Vagina (tissue), 2 donors: ENCODE measurements at regions of chr6 and their contacts with region 1.

Region 1: GRCh38 chr6:30483677-30484279 is 5.5 kb upstream of the HLA-E start:
- DNase-seq: no peak
- H3K4me3 ChIP-seq: no peak overlapping the region
- H3K27ac ChIP-seq: no peak overlapping the region
- H3K4me1 ChIP-seq: peaks cover 20% of the 10 kb centered on the region
- H3K27me3 ChIP-seq: peaks cover 10% of the 10 kb centered on the region
- CTCF ChIP-seq: peak; percentile 38 to 72 (median 55)
- POLR2A ChIP-seq: no peak

Region 2: DNA sequence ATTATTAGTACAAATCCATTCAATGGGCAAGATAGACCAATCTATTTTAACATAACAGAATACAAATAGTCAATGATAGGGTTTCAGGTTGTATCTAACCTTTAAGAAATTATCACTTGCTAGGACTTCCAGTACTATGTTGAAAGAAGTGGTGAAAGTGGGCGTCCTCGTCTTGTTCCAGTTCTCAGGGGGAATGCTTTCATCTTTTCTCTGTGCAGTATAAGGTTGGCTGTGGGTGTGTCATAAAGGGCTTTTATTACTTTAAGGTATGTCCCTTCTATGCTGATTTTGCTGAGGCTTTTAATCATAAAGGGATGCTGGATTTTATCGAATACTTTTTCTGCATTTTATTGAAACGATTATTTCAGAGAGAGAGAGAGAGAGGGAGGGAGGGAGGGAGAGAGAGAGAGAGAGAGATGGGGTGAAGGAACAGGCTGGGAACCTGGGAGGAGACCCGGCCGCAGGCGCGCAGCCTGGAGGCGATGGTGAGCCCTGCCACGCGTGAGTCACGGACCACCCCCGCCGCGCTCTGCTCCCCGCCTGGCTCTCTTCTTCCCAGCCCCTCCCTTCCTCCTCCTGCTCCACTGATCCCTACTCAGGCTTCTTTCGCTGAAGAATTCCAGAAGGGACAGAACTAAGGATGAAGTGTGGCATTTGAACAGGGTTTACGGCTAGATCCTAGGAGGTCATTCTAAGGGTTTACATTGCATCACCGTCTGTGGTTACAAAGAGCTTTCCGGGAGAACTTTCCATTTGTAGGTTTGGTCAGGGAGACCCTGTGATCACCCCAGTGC is 39.9 kb before region 1 on chr6:
- intact Hi-C with region 1: no loop called
- DNase-seq: no peak
- H3K4me3 ChIP-seq: no peak overlapping the region
- H3K27ac ChIP-seq: no peak overlapping the region
- H3K4me1 ChIP-seq: peaks cover 6% of the 10 kb centered on the region
- H3K27me3 ChIP-seq: peaks cover 5% of the 10 kb centered on the region
- CTCF ChIP-seq: no peak
- POLR2A ChIP-seq: no peak

Region 3: DNA sequence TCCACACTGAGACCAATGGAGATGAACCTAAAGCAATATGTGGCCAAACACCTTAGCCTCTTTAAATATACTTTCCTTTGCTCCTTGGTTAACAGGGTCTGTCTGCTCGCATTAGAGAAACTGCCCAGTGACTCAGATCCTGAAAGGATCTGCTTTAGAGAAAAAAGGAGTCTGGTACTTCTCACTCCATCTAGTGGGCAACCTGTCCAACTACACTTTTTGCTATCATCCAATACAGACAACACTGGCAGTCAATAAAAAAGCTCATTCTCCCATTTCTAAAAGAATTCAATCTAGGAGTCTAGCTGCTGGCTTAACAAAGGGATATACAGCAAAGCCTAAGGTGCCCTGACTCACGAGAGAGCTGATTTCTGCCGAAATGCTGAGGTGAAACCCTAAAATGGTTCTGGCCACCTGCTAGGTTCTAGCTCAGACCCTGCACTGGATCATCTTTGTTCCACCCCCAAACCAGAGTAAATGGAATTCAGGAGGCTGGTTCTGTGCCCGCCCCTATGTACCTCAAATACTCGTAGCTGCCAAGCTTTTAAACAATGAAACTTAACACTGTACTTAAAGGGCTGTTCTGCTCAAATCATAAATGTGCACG is 61.0 kb after region 1 on chr6:
- intact Hi-C with region 1: loop called (anchors 5 kb)
- DNase-seq: peak in 1 of 2 donors; percentile 25
- H3K4me3 ChIP-seq: no peak overlapping the region
- H3K27ac ChIP-seq: no peak overlapping the region
- H3K4me1 ChIP-seq: peaks cover 11% of the 10 kb centered on the region
- H3K27me3 ChIP-seq: no peaks in the 10 kb centered on the region
- CTCF ChIP-seq: peak; percentile 63 to 91 (median 70)
- POLR2A ChIP-seq: no peak

Region 4: GRCh38 chr6:30742316-30743098 is 258.7 kb after region 1 on chr6 and contains the start of gene FLOT1:
- intact Hi-C with region 1: no loop called
- DNase-seq: peak in 1 of 2 donors; percentile 98
- H3K4me3 ChIP-seq: peak within 1 kb of the TSS; percentile 65 to 89
- H3K27ac ChIP-seq: peak within 1 kb of the TSS; percentile 95
- H3K4me1 ChIP-seq: peaks cover 57% of the 10 kb centered on the region
- H3K27me3 ChIP-seq: no peaks in the 10 kb centered on the region
- CTCF ChIP-seq: no peak
- POLR2A ChIP-seq: peak in 1 of 2 donors; percentile 61
- total RNA-seq, gene FLOT1: 165 TPM